ENCODE measurements at regions of chr10 and their contacts with region 1.

Region 1: GRCh38 chr10:99619851-99620712 is at the start of gene SLC25A28:
- DNase-seq: peak; percentile 97
- H3K4me3 ChIP-seq: peak within 1 kb of the TSS; percentile 68 to 93 (median 80)
- H3K27ac ChIP-seq: peak within 1 kb of the TSS; percentile 91 to 100 (median 99)
- H3K4me1 ChIP-seq: peaks cover 27 to 61% (median 52%) of the 10 kb centered on the region in 6 donors
- H3K27me3 ChIP-seq: no peaks in the 10 kb centered on the region
- CTCF ChIP-seq: peak in 3 of 11 experiments; percentile 18 to 34 (median 26)
- POLR2A ChIP-seq: peak in 1 of 3 donors; percentile 43
- total RNA-seq, gene SLC25A28: 33.9 to 67.1 (median 51.6) TPM

Region 2: GRCh38 chr10:99435986-99436638 is 184.0 kb before region 1 on chr10:
- intact Hi-C with region 1: loop called (anchors 5 kb)
- DNase-seq: no peak
- H3K4me3 ChIP-seq: no peak overlapping the region
- H3K27ac ChIP-seq: peak overlapping the region in 6 of 8 donors; percentile 8 to 53 (median 44)
- H3K4me1 ChIP-seq: peaks cover 4 to 54% (median 22%) of the 10 kb centered on the region in 6 donors
- H3K27me3 ChIP-seq: no peaks in the 10 kb centered on the region
- CTCF ChIP-seq: peak in 10 of 11 experiments; percentile 24 to 63 (median 50)
- POLR2A ChIP-seq: no peak

Region 3: DNA sequence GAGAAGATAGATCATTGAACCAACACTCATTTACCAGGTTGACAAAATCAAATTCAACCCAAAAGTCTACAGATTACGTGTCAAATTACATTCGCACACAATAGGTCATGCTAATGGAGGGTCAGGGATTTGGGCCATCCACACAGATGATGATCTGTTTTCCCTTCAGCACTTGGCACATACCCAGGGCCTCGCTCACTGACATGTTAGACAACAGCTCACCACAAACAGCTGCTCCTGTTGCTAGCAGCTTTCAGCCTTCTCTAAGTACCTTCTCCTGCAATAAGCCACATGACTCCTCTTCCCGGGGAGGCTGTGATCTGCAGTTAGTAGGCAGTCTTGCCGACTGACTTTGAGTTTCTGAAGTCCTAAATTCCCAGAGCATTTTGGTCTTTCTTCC is 68.9 kb before region 1 on chr10:
- intact Hi-C with region 1: no loop called
- DNase-seq: no peak
- H3K4me3 ChIP-seq: no peak overlapping the region
- H3K27ac ChIP-seq: peak overlapping the region in 6 of 8 donors; percentile 12 to 54 (median 30)
- H3K4me1 ChIP-seq: peaks cover 0 to 7% (median 0%) of the 10 kb centered on the region in 6 donors
- H3K27me3 ChIP-seq: peaks cover 0 to 28% (median 0%) of the 10 kb centered on the region in 7 donors
- CTCF ChIP-seq: no peak
- POLR2A ChIP-seq: no peak

Region 4: GRCh38 chr10:99711129-99711719 is 91.1 kb after region 1 on chr10:
- intact Hi-C with region 1: loop called (anchors 10 kb)
- DNase-seq: no peak
- H3K4me3 ChIP-seq: no peak overlapping the region
- H3K27ac ChIP-seq: peak overlapping the region in 4 of 8 donors; percentile 15 to 67 (median 64)
- H3K4me1 ChIP-seq: peaks cover 0 to 32% (median 2%) of the 10 kb centered on the region in 6 donors
- H3K27me3 ChIP-seq: no peaks in the 10 kb centered on the region
- CTCF ChIP-seq: peak in 9 of 11 experiments; percentile 38 to 64 (median 48)
- POLR2A ChIP-seq: no peak

Measured in spleen (tissue), 13 donors.